Astrocyte of the cerebellum (primary cell): ENCODE measurements at regions of chr16 and their contacts with region 1.

Region 1: GRCh38 chr16:47829850-47830600 is 325.8 kb downstream of the ABCC12 start:
- DNase-seq: no peak
- H3K4me3 ChIP-seq: no peak overlapping the region
- CTCF ChIP-seq: no peak

Region 2: GRCh38 chr16:47779201-47780016 is 50.6 kb before region 1 on chr16:
- in situ Hi-C with region 1: loop called (anchors 5 kb)
- DNase-seq: no peak
- H3K4me3 ChIP-seq: no peak overlapping the region
- CTCF ChIP-seq: no peak

Region 3: DNA sequence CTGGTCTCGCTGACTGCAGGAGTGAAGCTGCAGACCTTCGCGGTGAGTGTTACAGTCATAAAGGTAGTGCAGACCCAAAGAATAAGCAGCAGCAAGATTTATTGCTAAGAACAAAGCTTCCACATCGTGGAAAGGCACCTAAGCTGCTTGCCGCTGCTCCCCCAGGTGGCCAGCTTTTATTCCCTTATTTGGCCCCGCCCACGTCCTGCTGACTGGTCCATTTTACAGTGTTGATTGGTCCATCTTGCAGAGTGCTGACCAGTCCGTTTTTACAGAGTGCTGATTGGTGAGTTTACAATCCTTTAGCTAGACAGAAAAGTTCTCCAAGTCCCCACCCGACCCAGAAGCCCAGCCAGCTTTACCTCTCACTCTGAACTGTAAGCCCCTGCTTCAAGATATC is 98.0 kb after region 1 on chr16:
- in situ Hi-C with region 1: no loop called
- DNase-seq: no peak
- H3K4me3 ChIP-seq: no peak overlapping the region
- CTCF ChIP-seq: no peak